ENCODE measurements at regions of chr2 and their contacts with region 1.

Region 1: GRCh38 chr2:224369028-224369632 is 32.8 kb downstream of the FAM124B start:
- DNase-seq: no peak
- H3K4me3 ChIP-seq: no peak overlapping the region
- H3K27ac ChIP-seq: no peak overlapping the region
- H3K4me1 ChIP-seq: no peaks in the 10 kb centered on the region; a peak in 1 of 7 replicates
- H3K27me3 ChIP-seq: no peaks in the 10 kb centered on the region
- CTCF ChIP-seq: peak in 2 of 3 experiments; percentile 48 to 65; a peak in 3 of 4 replicates
- EP300 ChIP-seq: no peak
- POLR2A ChIP-seq: no peak
- RAD21 ChIP-seq: peak; percentile 54 to 63

Region 2: DNA sequence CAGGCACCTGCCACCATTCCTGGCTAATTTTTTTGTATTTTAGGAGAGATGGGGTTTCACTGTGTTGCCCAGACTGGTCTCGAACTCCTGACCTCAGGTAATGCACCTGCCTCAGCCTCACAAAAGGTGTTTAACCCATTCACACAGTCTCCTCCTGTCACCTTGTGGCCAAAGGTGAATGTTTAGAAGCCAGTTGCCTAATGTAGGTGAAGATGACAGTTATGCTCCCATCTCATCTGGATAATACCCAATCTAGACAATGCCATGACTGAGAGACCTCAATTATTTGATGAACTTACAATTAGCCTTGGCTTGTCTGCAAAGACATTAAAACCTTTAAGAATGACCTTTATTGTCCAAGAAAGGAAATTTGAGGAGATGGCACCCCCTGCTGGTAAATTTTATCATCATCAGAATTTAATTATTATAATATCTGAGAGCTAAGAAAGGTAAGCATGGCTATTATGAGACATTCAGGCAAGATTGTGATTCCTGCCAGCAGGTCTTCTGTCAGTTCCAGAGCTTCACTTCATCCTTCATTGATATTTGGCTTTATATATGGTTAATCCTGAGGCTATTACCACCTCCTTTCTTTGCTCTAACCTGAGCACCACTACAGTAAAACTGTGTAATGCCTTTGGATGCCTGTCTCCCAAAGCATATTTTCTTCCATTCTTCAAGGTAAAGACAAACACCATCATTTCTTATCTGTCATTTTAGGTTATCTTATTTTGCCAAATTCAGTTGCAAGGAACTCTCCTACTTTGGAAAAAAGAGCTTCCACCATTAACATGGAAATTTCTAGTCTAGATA is 84.8 kb before region 1 on chr2:
- CTCF ChIA-PET with region 1: interaction called, 12 read pairs
- POLR2A ChIA-PET with region 1: no interaction called
- DNase-seq: no peak
- H3K4me3 ChIP-seq: no peak overlapping the region
- H3K27ac ChIP-seq: no peak overlapping the region
- H3K4me1 ChIP-seq: no peaks in the 10 kb centered on the region
- H3K27me3 ChIP-seq: peaks cover 0 to 1% (median 0%) of the 10 kb centered on the region in 4 experiments; a peak in 1 of 7 replicates
- CTCF ChIP-seq: peak in 2 of 3 experiments; percentile 75 to 76; a peak in 3 of 4 replicates
- EP300 ChIP-seq: no peak
- POLR2A ChIP-seq: no peak
- RAD21 ChIP-seq: peak; percentile 74 to 79

Region 3: GRCh38 chr2:224357098-224357901 is 11.8 kb before region 1 on chr2:
- CTCF ChIA-PET with region 1: interaction called, 39 read pairs
- POLR2A ChIA-PET with region 1: no interaction called
- DNase-seq: peak in 1 of 2 experiments; percentile 76
- H3K4me3 ChIP-seq: no peak overlapping the region
- H3K27ac ChIP-seq: no peak overlapping the region
- H3K4me1 ChIP-seq: no peaks in the 10 kb centered on the region
- H3K27me3 ChIP-seq: no peaks in the 10 kb centered on the region
- CTCF ChIP-seq: peak in 2 of 3 experiments; percentile 74 to 78; a peak in 3 of 4 replicates
- EP300 ChIP-seq: no peak
- POLR2A ChIP-seq: no peak
- RAD21 ChIP-seq: peak; percentile 89 to 91

Region 4: DNA sequence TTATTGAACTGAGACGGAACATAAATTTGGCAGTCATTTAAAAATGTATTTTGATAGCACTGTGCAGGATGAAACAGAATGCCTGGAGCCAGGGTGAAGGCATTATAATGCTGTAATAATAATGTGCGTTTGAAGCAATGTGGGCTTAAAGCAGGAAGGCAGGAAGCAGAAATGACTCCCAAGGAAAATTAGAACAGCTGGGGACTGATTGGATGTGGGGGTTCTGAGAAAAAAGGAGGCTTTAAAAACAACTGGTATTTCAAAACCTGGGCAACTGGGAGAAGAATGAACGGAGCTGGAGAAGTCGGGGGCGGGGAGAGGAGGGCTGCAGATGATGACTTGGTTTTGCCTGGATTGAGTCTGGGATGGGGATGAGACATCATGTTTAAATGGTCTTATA is 20.2 kb after region 1 on chr2:
- CTCF ChIA-PET with region 1: interaction called, 21 read pairs
- POLR2A ChIA-PET with region 1: interaction called, 3 read pairs
- DNase-seq: no peak
- H3K4me3 ChIP-seq: no peak overlapping the region
- H3K27ac ChIP-seq: no peak overlapping the region
- H3K4me1 ChIP-seq: no peaks in the 10 kb centered on the region
- H3K27me3 ChIP-seq: no peaks in the 10 kb centered on the region
- CTCF ChIP-seq: no peak
- EP300 ChIP-seq: no peak
- POLR2A ChIP-seq: no peak
- RAD21 ChIP-seq: no peak

Region 5: DNA sequence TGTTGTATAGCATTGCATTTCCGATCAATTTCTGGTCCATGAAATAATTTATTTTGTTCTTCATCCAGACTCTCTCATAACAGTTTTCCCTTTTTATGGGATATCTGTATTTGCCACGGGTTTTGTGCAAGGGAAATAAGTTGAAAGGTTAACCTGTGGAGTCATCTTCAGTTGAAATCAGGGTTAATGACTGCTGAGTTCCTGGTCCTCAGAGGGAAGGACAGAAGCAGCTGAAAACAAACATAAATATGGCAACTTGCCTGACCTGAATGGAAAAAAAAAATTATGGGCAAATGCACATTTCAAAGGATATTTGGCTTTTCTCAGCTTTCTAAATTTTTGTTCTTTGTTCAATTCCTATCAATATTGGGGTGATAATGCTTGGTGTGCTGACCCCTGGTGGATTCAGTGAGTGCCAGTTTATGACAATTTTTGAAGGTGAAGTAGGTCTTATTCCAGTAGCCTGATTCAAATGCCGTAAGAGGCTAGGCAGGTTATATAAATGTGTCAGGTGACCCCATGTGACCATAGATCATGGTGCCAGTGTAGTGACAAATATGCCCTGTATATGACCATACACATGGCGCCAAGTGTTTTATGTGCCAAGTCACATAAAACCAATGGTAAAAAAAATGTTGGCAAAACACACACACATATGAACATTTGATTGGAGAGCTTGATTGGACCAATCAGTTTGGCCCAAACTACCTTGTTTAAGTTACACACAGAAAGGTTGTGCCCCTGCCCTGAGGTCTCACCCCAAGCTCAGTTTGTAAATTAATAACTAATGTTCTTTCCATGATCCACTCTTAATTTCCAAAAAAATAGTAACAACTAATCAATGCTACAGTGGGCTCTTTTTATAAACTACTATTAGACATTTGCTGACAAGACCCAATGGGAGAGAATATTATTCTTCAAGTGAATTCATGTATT is 80.3 kb after region 1 on chr2:
- CTCF ChIA-PET with region 1: interaction called, 17 read pairs
- POLR2A ChIA-PET with region 1: no interaction called
- DNase-seq: no peak
- H3K4me3 ChIP-seq: no peak overlapping the region
- H3K27ac ChIP-seq: no peak overlapping the region
- H3K4me1 ChIP-seq: no peaks in the 10 kb centered on the region
- H3K27me3 ChIP-seq: no peaks in the 10 kb centered on the region
- CTCF ChIP-seq: peak in 2 of 3 experiments; percentile 46 to 66; a peak in 3 of 4 replicates
- EP300 ChIP-seq: no peak
- POLR2A ChIP-seq: no peak
- RAD21 ChIP-seq: peak; percentile 53 to 65